GM12878 (cell line): ENCODE measurements at regions of chr17 and their contacts with region 1.

Region 1: GRCh38 chr17:39754161-39754951 is 16.6 kb downstream of the GRB7 start:
- DNase-seq: peak; percentile 87
- ATAC-seq: peak; percentile 82
- H3K4me3 ChIP-seq: peak overlapping the region; percentile 66
- H3K27ac ChIP-seq: peak overlapping the region; percentile 96
- H3K4me1 ChIP-seq: peaks cover 53% of the 10 kb centered on the region
- H3K27me3 ChIP-seq: no peaks in the 10 kb centered on the region
- CTCF ChIP-seq: peak; percentile 81 to 93 (median 88)
- EP300 ChIP-seq: peak; percentile 65 to 73; a peak in 3 of 4 replicates
- POLR2A ChIP-seq: peak; percentile 75
- RAD21 ChIP-seq: peak; percentile 80

Region 2: GRCh38 chr17:39676198-39676819 is 78.0 kb before region 1 on chr17:
- CTCF ChIA-PET with region 1: interaction called, 6 read pairs
- POLR2A ChIA-PET with region 1: no interaction called
- RAD21 ChIA-PET with region 1: interaction called, 10 read pairs
- SMC1A ChIA-PET with region 1: interaction called, 4 read pairs
- in situ Hi-C with region 1: no loop called
- intact Hi-C with region 1: no loop called
- DNase-seq: peak; percentile 13
- ATAC-seq: peak; percentile 83
- H3K4me3 ChIP-seq: no peak overlapping the region
- H3K27ac ChIP-seq: no peak overlapping the region
- H3K4me1 ChIP-seq: peaks cover 44% of the 10 kb centered on the region
- H3K27me3 ChIP-seq: no peaks in the 10 kb centered on the region
- CTCF ChIP-seq: no peak
- EP300 ChIP-seq: 0 out of 4 replicates have a peak, but pooled peaks of 1 of the 2 experiments have one; percentile 32
- POLR2A ChIP-seq: no peak
- RAD21 ChIP-seq: no peak

Region 3: GRCh38 chr17:39769974-39770587 is 15.7 kb after region 1 on chr17:
- CTCF ChIA-PET with region 1: interaction called, 30 read pairs
- POLR2A ChIA-PET with region 1: interaction called, 8 read pairs
- RAD21 ChIA-PET with region 1: interaction called, 57 read pairs
- SMC1A ChIA-PET with region 1: interaction called, 44 read pairs
- in situ Hi-C with region 1: no loop called
- intact Hi-C with region 1: loop called (anchors 1 kb)
- DNase-seq: peak; percentile 84
- ATAC-seq: peak; percentile 81
- H3K4me3 ChIP-seq: peak overlapping the region; percentile 79; the same call in 1 of the 2 replicates
- H3K27ac ChIP-seq: peak overlapping the region; percentile 95
- H3K4me1 ChIP-seq: peaks cover 85% of the 10 kb centered on the region
- H3K27me3 ChIP-seq: no peaks in the 10 kb centered on the region
- CTCF ChIP-seq: no peak
- EP300 ChIP-seq: peak; percentile 76 to 92
- POLR2A ChIP-seq: no peak; the same call in 1 of the 2 replicates
- RAD21 ChIP-seq: no peak

Region 4: GRCh38 chr17:39794249-39794970 is 40.1 kb after region 1 on chr17:
- CTCF ChIA-PET with region 1: interaction called, 7 read pairs
- POLR2A ChIA-PET with region 1: interaction called, 10 read pairs
- RAD21 ChIA-PET with region 1: interaction called, 33 read pairs
- SMC1A ChIA-PET with region 1: interaction called, 42 read pairs
- in situ Hi-C with region 1: no loop called
- intact Hi-C with region 1: loop called (anchors 5 kb)
- DNase-seq: peak; percentile 95
- ATAC-seq: peak; percentile 98
- H3K4me3 ChIP-seq: peak overlapping the region; percentile 50
- H3K27ac ChIP-seq: peak overlapping the region; percentile 93
- H3K4me1 ChIP-seq: peaks cover 63% of the 10 kb centered on the region
- H3K27me3 ChIP-seq: no peaks in the 10 kb centered on the region
- CTCF ChIP-seq: no peak
- EP300 ChIP-seq: peak; percentile 46 to 76; a peak in 3 of 4 replicates
- POLR2A ChIP-seq: peak; percentile 53; the same call in 1 of the 2 replicates
- RAD21 ChIP-seq: 0 out of 2 replicates have a peak, but pooled peaks have one; percentile 2

Region 5: GRCh38 chr17:39845052-39845846 is 90.9 kb after region 1 on chr17:
- CTCF ChIA-PET with region 1: interaction called, 4 read pairs
- POLR2A ChIA-PET with region 1: interaction called, 3 read pairs
- RAD21 ChIA-PET with region 1: interaction called, 19 read pairs
- SMC1A ChIA-PET with region 1: no interaction called
- in situ Hi-C with region 1: no loop called
- intact Hi-C with region 1: no loop called
- DNase-seq: no peak
- ATAC-seq: peak; percentile 23; the same call in 2 of the 3 replicates
- H3K4me3 ChIP-seq: 0 out of 2 replicates have a peak overlapping the region, but pooled peaks have one; percentile 31
- H3K27ac ChIP-seq: peak overlapping the region; percentile 40
- H3K4me1 ChIP-seq: peaks cover 58% of the 10 kb centered on the region
- H3K27me3 ChIP-seq: no peaks in the 10 kb centered on the region
- CTCF ChIP-seq: no peak
- EP300 ChIP-seq: no peak
- POLR2A ChIP-seq: no peak
- RAD21 ChIP-seq: no peak

Region 6: GRCh38 chr17:39927101-39927928 is 173.0 kb after region 1 on chr17 and contains the starts of genes LRRC3C and ORMDL3:
- CTCF ChIA-PET with region 1: no interaction called
- POLR2A ChIA-PET with region 1: interaction called, 6 read pairs
- RAD21 ChIA-PET with region 1: interaction called, 4 read pairs
- SMC1A ChIA-PET with region 1: no interaction called
- in situ Hi-C with region 1: no loop called
- intact Hi-C with region 1: loop called (anchors 5 kb)
- DNase-seq: no peak
- ATAC-seq: peak; percentile 76
- H3K4me3 ChIP-seq: peak within 1 kb of the TSS; percentile 87
- H3K27ac ChIP-seq: peak within 1 kb of the TSS; percentile 82
- H3K4me1 ChIP-seq: peaks cover 22% of the 10 kb centered on the region
- H3K27me3 ChIP-seq: no peaks in the 10 kb centered on the region
- CTCF ChIP-seq: no peak
- EP300 ChIP-seq: 0 out of 4 replicates have a peak, but pooled peaks of 1 of the 2 experiments have one; percentile 10
- POLR2A ChIP-seq: peak; percentile 84
- RAD21 ChIP-seq: no peak
- polyA plus RNA-seq, gene LRRC3C: not detected
- polyA plus RNA-seq, gene ORMDL3: 8.8 to 21.1 TPM

Region 7: GRCh38 chr17:39980351-39981206 is 226.2 kb after region 1 on chr17 and contains the start of gene PSMD3:
- CTCF ChIA-PET with region 1: interaction called, 5 read pairs
- POLR2A ChIA-PET with region 1: no interaction called
- RAD21 ChIA-PET with region 1: interaction called, 8 read pairs
- SMC1A ChIA-PET with region 1: no interaction called
- in situ Hi-C with region 1: no loop called
- intact Hi-C with region 1: loop called (anchors 5 kb)
- DNase-seq: peak; percentile 100
- ATAC-seq: peak; percentile 94
- H3K4me3 ChIP-seq: peak within 1 kb of the TSS; percentile 90
- H3K27ac ChIP-seq: peak within 1 kb of the TSS; percentile 90
- H3K4me1 ChIP-seq: peaks cover 6% of the 10 kb centered on the region
- H3K27me3 ChIP-seq: no peaks in the 10 kb centered on the region; a peak in 1 of 4 replicates
- CTCF ChIP-seq: peak; percentile 80 to 97 (median 92)
- EP300 ChIP-seq: peak; percentile 21 to 44; a peak in 1 of 4 replicates
- POLR2A ChIP-seq: peak; percentile 93
- RAD21 ChIP-seq: peak; percentile 92
- polyA plus RNA-seq, gene PSMD3: 2.2 to 2.6 TPM